ENCODE measurements at regions of chr9 and their contacts with region 1.

Region 1: GRCh38 chr9:7536310-7536939 is 263.2 kb downstream of the DMAC1 start:
- DNase-seq: peak; percentile 28
- ATAC-seq: peak; percentile 44 to 77

Region 2: DNA sequence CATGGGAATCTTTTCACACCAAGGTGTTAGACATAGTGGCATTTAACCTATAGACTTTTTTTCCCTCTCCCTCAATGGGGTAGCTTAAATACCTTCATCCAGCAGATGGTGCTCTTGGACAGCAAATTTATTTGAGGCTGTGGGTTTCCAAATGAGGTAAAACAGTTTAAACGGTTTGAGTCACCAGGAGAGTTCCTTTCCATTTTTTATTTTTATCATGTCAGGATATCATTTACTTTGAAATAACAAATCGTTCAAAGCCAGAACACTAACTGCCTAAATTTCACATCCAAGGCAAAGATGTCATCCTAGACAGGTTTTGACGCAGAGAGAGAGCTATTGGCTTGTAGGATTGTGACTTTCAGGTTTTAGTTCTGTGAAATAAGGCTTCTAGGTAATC is 709.0 kb before region 1 on chr9:
- intact Hi-C with region 1: loop called in 1 of 2 experiments (anchors 10 kb)
- DNase-seq: no peak
- ATAC-seq: peak in 1 of 2 donors; percentile 23

Region 3: GRCh38 chr9:7053903-7054302 is 482.5 kb before region 1 on chr9:
- intact Hi-C with region 1: loop called in 1 of 2 experiments (anchors 5 kb)
- DNase-seq: no peak
- ATAC-seq: no peak

Region 4: DNA sequence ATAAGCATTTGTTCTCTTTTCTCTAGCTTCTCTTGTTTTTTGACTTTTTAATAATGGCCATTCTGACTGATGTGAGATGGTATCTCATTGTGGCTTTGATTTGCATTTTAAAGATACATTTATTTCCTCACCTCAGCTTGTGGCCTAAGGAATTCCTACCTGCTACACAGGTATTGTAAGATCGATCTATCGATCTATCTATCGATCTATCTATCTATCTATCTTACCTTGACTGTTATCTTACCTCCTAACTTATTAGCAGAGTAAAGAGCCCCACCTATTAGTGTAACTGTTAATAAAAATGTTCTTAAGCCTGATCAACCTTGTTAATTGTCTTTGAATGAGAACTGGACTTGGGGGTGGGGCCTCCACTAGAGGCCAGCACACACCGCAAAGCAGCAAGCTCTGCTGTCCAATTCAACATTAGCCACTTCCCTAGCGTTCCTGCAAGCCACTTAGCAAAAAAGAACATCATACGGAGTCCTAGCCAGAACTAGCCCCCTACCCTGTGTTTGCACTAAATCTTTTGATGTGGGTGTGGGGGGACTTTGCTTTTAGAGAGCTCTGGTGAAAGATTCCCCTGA is 262.9 kb before region 1 on chr9:
- intact Hi-C with region 1: loop called in 1 of 2 experiments (anchors 10 kb)
- DNase-seq: no peak
- ATAC-seq: peak in 1 of 2 donors; percentile 32

Region 5: DNA sequence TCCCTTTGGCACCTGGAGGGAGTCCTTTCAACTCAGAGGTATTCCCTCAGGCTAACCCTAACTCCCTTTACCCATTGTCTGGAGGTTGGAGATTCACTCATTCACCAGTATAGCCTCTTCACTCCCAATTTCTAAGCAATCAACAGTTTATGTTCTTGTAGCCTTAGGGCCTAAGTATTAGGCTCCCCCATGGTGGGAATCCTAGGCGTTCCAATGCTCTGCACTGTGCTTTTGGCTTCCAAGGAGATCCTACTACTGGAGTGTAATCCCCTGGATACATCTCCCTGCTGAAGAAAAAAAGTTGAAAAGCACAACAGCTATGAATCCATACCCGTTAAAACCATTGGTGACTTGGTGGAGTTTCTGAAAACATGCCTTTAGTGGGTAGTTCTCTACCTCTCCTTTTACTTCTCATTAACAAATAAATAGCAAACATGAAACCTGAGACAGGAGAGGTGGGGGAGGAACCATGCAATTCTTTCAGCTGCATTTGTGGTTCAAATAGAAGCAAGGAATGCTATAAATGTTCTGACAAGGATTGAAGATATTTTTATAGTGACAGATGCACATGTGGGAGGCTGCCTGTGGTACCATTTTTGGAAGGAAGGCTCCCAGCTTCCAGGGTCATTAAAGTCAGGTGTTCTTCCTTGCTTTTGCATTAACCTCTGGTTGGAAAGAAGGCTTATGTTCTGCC is 133.9 kb before region 1 on chr9:
- intact Hi-C with region 1: loop called in 1 of 2 experiments (anchors 5 kb)
- DNase-seq: no peak
- ATAC-seq: no peak

Measured in left cardiac atrium (tissue), 4 donors.